ENCODE measurements at regions of chr5 and their contacts with region 1.

Region 1: GRCh38 chr5:168422431-168422830 is 63.8 kb upstream of the RARS1 start:
- DNase-seq: peak; percentile 61
- H3K4me3 Mint-ChIP-seq: no peak overlapping the region
- H3K27ac Mint-ChIP-seq: no peak overlapping the region
- H3K4me1 Mint-ChIP-seq: no peaks in the 10 kb centered on the region
- H3K27me3 Mint-ChIP-seq: no peaks in the 10 kb centered on the region
- CTCF ChIP-seq: peak; percentile 55

Region 2: GRCh38 chr5:168282120-168282519 is 140.3 kb before region 1 on chr5:
- CTCF ChIA-PET with region 1: interaction called, 11 read pairs
- POLR2A ChIA-PET with region 1: no interaction called
- intact Hi-C with region 1: no loop called
- DNase-seq: peak; percentile 85
- H3K4me3 Mint-ChIP-seq: no peak overlapping the region
- H3K27ac Mint-ChIP-seq: no peak overlapping the region
- H3K4me1 Mint-ChIP-seq: peaks cover 8% of the 10 kb centered on the region
- H3K27me3 Mint-ChIP-seq: no peaks in the 10 kb centered on the region
- CTCF ChIP-seq: no peak

Region 3: DNA sequence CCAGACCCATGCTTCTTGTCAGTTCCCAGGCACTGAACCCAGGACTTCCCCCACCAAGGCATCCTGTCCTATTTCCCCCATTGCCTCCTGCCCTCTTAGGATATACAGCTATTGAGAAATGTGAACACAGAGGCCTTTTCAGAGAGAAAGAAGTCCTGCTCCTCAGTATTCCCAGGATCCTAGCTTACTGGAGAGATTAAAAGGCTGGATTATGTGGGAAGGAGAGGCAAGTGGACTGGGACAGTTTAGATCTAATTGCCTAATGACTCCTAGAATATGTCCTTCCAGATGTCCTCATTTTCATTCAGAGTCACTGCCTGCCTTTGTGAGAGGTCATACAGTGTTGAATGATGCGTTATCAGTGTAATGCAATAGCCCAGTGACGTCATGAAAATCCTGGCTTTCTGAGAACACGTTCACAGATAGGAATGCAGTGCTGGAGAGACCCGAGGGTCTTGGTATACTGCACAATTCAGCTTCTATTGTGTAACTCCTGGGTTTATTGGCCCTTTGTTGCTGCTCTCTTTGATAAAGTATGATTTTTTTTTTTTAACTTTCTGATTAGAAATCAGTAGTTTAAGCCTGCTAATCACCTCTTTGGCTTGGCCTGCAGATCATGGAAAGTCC is 104.8 kb before region 1 on chr5:
- CTCF ChIA-PET with region 1: interaction called, 10 read pairs
- POLR2A ChIA-PET with region 1: no interaction called
- intact Hi-C with region 1: no loop called
- DNase-seq: peak; percentile 93
- H3K4me3 Mint-ChIP-seq: no peak overlapping the region
- H3K27ac Mint-ChIP-seq: peak overlapping the region; percentile 20
- H3K4me1 Mint-ChIP-seq: peaks cover 38% of the 10 kb centered on the region
- H3K27me3 Mint-ChIP-seq: no peaks in the 10 kb centered on the region
- CTCF ChIP-seq: no peak

Region 4: DNA sequence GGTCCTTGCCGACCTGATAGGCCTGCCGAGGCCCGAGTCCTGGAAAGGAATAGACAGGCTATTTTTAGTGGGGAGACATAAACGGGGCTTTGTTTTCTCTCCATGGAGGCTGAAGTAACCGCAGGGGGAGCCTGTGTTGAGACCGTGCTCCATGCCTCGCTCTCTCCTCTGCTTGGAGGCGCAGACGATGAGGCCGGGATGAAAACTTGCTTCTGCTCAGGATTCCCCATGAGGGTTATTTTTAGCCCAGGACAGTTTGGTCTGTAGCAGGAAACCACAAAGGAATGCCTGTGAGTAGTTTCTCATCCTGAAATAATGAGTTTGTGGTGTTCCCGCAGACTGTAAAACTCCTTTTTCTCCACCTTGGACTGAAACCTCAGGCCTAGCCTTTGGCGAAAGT is 18.1 kb before region 1 on chr5:
- CTCF ChIA-PET with region 1: interaction called, 47 read pairs
- POLR2A ChIA-PET with region 1: no interaction called
- intact Hi-C with region 1: no loop called
- DNase-seq: peak; percentile 81
- H3K4me3 Mint-ChIP-seq: peak overlapping the region; percentile 6
- H3K27ac Mint-ChIP-seq: peak overlapping the region; percentile 24
- H3K4me1 Mint-ChIP-seq: peaks cover 29% of the 10 kb centered on the region
- H3K27me3 Mint-ChIP-seq: no peaks in the 10 kb centered on the region
- CTCF ChIP-seq: no peak

Region 5: DNA sequence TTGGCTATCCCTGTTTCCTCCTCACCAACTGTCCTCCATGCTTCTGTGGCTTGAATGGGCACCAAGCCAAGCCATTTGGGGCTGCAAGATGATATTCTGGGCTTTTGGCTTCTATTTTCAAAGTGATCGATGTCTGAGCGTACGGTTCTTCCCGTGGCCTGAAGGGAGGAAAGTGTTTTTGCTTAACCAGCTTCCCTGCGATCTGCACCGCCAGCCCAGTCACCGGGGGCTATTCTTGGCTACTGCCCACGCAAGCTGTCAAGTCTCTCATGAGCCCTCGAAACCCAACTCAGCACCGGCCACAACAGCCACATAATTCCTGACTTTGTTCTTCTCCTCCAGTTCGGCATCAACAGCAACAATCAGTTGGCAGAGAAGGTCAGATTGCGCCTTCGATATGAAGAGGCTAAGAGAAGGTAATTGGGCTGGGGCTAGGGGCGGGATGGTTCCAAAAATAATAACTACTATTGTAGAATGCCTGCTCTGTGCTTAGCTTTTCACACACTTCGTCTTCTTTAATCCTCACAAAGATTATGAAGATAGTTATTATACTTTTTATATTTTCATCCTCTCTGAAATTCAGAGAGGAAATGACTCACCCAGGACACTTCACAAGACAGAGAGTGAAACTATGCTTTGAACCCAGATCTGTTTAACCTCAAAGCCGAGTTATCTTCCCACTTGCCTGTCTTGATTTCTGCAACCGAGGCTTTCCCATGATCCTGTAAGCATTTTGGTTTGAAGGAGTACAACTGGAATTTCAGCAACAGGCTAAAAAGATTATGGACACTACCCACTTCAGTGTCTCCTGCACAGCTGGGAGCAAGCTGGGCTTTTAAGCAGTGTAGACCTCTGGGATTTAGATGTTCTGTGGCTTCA is 12.6 kb before region 1 on chr5:
- CTCF ChIA-PET with region 1: interaction called, 47 read pairs
- POLR2A ChIA-PET with region 1: no interaction called
- intact Hi-C with region 1: no loop called
- DNase-seq: peak; percentile 83
- H3K4me3 Mint-ChIP-seq: peak overlapping the region; percentile 28
- H3K27ac Mint-ChIP-seq: peak overlapping the region; percentile 78
- H3K4me1 Mint-ChIP-seq: peaks cover 49% of the 10 kb centered on the region
- H3K27me3 Mint-ChIP-seq: no peaks in the 10 kb centered on the region
- CTCF ChIP-seq: no peak

Region 6: GRCh38 chr5:168434001-168434400 is 11.6 kb after region 1 on chr5:
- CTCF ChIA-PET with region 1: interaction called, 23 read pairs
- POLR2A ChIA-PET with region 1: no interaction called
- intact Hi-C with region 1: no loop called
- DNase-seq: no peak
- H3K4me3 Mint-ChIP-seq: no peak overlapping the region
- H3K27ac Mint-ChIP-seq: no peak overlapping the region
- H3K4me1 Mint-ChIP-seq: no peaks in the 10 kb centered on the region
- H3K27me3 Mint-ChIP-seq: no peaks in the 10 kb centered on the region
- CTCF ChIP-seq: no peak

Region 7: GRCh38 chr5:168698991-168699401 is 276.6 kb after region 1 on chr5:
- CTCF ChIA-PET with region 1: no interaction called
- POLR2A ChIA-PET with region 1: no interaction called
- intact Hi-C with region 1: no loop called
- DNase-seq: no peak
- H3K4me3 Mint-ChIP-seq: no peak overlapping the region
- H3K27ac Mint-ChIP-seq: no peak overlapping the region
- H3K4me1 Mint-ChIP-seq: no peaks in the 10 kb centered on the region
- H3K27me3 Mint-ChIP-seq: no peaks in the 10 kb centered on the region
- CTCF ChIP-seq: no peak

Region 8: DNA sequence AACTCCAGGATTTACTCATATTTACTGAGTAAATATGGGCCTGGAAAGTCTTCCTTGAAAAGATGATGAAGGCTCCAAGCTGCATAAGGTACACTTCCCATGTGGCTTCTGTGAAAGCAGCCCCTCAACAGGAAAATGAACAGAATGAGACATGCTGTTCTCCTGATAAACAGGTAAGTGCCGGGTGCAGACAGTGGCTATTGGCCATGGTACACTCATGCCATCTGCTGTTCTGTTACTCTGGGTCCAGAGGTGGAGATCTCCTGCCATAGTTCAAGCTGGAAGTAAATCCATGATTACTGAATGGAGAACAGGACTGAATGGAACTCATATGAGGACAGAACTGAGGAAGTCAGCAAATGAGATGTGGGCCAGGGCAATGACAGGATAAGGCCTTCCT is 774.9 kb after region 1 on chr5:
- CTCF ChIA-PET with region 1: no interaction called
- POLR2A ChIA-PET with region 1: no interaction called
- intact Hi-C with region 1: no loop called
- DNase-seq: peak; percentile 65
- H3K4me3 Mint-ChIP-seq: no peak overlapping the region
- H3K27ac Mint-ChIP-seq: no peak overlapping the region
- H3K4me1 Mint-ChIP-seq: no peaks in the 10 kb centered on the region
- H3K27me3 Mint-ChIP-seq: no peaks in the 10 kb centered on the region
- CTCF ChIP-seq: no peak

Region 9: GRCh38 chr5:169686137-169686536 is 1263.7 kb after region 1 on chr5:
- CTCF ChIA-PET with region 1: no interaction called
- POLR2A ChIA-PET with region 1: no interaction called
- intact Hi-C with region 1: no loop called
- DNase-seq: no peak
- H3K4me3 Mint-ChIP-seq: no peak overlapping the region
- H3K27ac Mint-ChIP-seq: no peak overlapping the region
- H3K4me1 Mint-ChIP-seq: no peaks in the 10 kb centered on the region
- H3K27me3 Mint-ChIP-seq: no peaks in the 10 kb centered on the region
- CTCF ChIP-seq: no peak